Activated CD4-positive, alpha-beta T cell treated with anti-CD3 and anti-CD28 coated beads for 36 hours (primary cell): ENCODE measurements at regions of chr11 and their contacts with region 1.

Region 1: GRCh38 chr11:123381817-123382554 is 48.1 kb upstream of the GRAMD1B start:
- DNase-seq: peak; percentile 81
- ATAC-seq: peak; percentile 91
- H3K4me3 Mint-ChIP-seq: no peak overlapping the region
- H3K27ac Mint-ChIP-seq: peak overlapping the region; percentile 78
- H3K4me1 Mint-ChIP-seq: peaks cover 29% of the 10 kb centered on the region
- H3K27me3 Mint-ChIP-seq: peaks cover 4% of the 10 kb centered on the region

Region 2: DNA sequence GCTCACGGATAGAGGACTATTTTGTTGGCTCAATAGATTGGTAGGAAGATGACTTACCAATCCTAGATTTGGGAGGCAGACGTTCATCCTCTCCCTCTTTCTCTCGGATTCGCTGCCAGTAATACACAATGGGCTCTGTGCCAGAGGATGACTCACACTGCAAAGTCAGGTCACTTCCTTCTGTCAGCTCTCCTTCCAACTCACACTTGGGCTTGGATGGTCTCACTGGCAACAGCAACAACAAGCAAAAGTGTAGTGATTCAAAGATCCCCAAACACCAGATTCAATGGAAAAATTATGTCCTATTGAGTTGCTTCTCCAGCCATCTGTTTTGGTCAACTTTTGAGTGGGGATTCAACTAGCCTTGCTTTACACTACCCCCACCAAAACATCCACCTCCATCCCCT is 298.4 kb before region 1 on chr11:
- CTCF ChIA-PET with region 1: no interaction called
- POLR2A ChIA-PET with region 1: no interaction called
- intact Hi-C with region 1: loop called in 1 of 2 experiments (anchors 5 kb)
- DNase-seq: peak; percentile 89
- ATAC-seq: peak; percentile 35
- H3K4me3 Mint-ChIP-seq: peak overlapping the region; percentile 34
- H3K27ac Mint-ChIP-seq: peak overlapping the region; percentile 81
- H3K4me1 Mint-ChIP-seq: peaks cover 61% of the 10 kb centered on the region
- H3K27me3 Mint-ChIP-seq: no peaks in the 10 kb centered on the region

Region 3: DNA sequence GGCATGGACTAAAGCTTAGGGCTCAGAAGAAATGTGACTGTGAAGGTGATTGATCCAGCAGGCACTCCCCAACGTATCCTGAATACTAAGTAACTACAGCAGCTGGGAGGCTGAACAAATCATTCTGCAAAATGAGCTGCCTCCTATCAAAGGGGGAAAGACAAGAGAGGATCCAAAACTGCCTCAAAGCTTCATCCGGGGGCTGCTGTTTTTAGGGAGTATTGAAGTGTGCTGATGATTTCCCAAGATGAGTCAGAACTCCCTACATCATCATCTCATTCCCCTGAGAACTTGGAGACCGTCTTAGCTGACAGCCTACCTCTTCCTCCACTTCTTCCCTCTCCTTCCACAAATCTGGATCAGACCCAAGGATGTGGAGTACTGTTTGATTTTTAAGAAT is 60.4 kb before region 1 on chr11:
- CTCF ChIA-PET with region 1: no interaction called
- POLR2A ChIA-PET with region 1: no interaction called
- intact Hi-C with region 1: no loop called
- DNase-seq: no peak
- ATAC-seq: no peak
- H3K4me3 Mint-ChIP-seq: no peak overlapping the region
- H3K27ac Mint-ChIP-seq: no peak overlapping the region
- H3K4me1 Mint-ChIP-seq: no peaks in the 10 kb centered on the region
- H3K27me3 Mint-ChIP-seq: peaks cover 12% of the 10 kb centered on the region

Region 4: GRCh38 chr11:123338330-123339005 is 43.5 kb before region 1 on chr11:
- CTCF ChIA-PET with region 1: no interaction called
- POLR2A ChIA-PET with region 1: no interaction called
- intact Hi-C with region 1: loop called (anchors 2 to 5 kb)
- DNase-seq: peak; percentile 27
- ATAC-seq: peak; percentile 66
- H3K4me3 Mint-ChIP-seq: no peak overlapping the region
- H3K27ac Mint-ChIP-seq: no peak overlapping the region
- H3K4me1 Mint-ChIP-seq: peaks cover 8% of the 10 kb centered on the region
- H3K27me3 Mint-ChIP-seq: peaks cover 17% of the 10 kb centered on the region

Region 5: DNA sequence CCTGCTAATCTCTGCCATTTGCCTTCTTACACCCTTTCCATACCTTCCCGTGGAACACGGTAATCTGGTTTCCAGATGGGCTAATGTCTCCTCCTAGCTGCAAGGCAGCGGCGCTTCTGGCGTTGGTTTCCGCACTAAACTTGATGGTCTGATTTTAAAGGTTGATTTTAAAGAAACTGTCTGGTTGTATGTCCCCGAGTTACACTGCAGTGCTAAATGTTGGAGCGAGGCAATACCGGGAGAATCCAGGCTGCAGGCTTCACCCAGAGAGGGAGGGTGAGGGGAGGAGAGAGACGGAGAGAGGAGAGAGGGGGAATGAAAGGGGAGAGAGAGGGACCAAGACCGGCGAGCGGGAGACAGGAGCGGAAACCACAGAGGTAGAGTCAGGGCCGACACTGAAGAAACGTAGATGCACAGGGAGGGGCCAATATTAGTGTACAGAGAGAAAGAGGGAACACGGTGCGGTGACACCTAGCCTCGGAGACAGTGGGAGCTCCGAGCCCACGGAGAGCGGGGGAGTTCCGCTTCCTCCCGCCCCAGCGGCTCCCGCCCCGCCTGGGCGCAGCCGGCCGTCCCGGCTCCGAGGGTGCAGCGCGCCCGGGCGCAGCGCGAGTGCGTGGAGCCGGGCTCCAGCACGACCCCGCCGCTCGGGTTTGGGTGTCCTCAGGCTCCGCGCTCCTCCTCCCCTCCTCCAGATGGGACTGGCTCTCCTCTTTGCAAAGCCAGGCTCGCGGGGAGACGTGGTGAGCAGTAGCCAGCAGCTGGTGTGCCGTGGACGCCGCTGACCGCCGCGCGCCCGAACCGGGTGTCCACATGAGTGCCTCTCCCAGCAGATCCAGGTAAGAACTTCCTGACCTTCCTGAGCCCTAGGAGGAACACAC is 23.8 kb before region 1 on chr11:
- CTCF ChIA-PET with region 1: interaction called, 5 read pairs
- POLR2A ChIA-PET with region 1: interaction called, 13 read pairs
- intact Hi-C with region 1: loop called (anchors 1 kb)
- DNase-seq: peak; percentile 71
- ATAC-seq: peak; percentile 77
- H3K4me3 Mint-ChIP-seq: peak overlapping the region; percentile 78
- H3K27ac Mint-ChIP-seq: peak overlapping the region; percentile 74
- H3K4me1 Mint-ChIP-seq: peaks cover 49% of the 10 kb centered on the region
- H3K27me3 Mint-ChIP-seq: peaks cover 38% of the 10 kb centered on the region

Region 6: GRCh38 chr11:123407130-123407995 is 25.4 kb after region 1 on chr11:
- CTCF ChIA-PET with region 1: interaction called, 7 read pairs
- POLR2A ChIA-PET with region 1: no interaction called
- intact Hi-C with region 1: loop called in 1 of 2 experiments (anchors 2 kb)
- DNase-seq: peak; percentile 79
- ATAC-seq: peak; percentile 74
- H3K4me3 Mint-ChIP-seq: peak overlapping the region; percentile 33
- H3K27ac Mint-ChIP-seq: peak overlapping the region; percentile 63
- H3K4me1 Mint-ChIP-seq: peaks cover 26% of the 10 kb centered on the region
- H3K27me3 Mint-ChIP-seq: peaks cover 5% of the 10 kb centered on the region

Region 7: GRCh38 chr11:123429913-123430720 is 48.1 kb after region 1 on chr11 and contains the start of gene GRAMD1B:
- CTCF ChIA-PET with region 1: interaction called, 3 read pairs
- POLR2A ChIA-PET with region 1: no interaction called
- intact Hi-C with region 1: loop called (anchors 1 kb)
- DNase-seq: peak; percentile 90
- ATAC-seq: peak; percentile 68
- H3K4me3 Mint-ChIP-seq: peak within 1 kb of the TSS; percentile 76
- H3K27ac Mint-ChIP-seq: peak within 1 kb of the TSS; percentile 79
- H3K4me1 Mint-ChIP-seq: peaks cover 39% of the 10 kb centered on the region
- H3K27me3 Mint-ChIP-seq: no peaks in the 10 kb centered on the region
- total RNA-seq, gene GRAMD1B: 38.6 to 45.7 TPM

Region 8: GRCh38 chr11:123454060-123454651 is 72.2 kb after region 1 on chr11:
- CTCF ChIA-PET with region 1: interaction called, 3 read pairs
- POLR2A ChIA-PET with region 1: interaction called, 4 read pairs
- intact Hi-C with region 1: loop called (anchors 1 kb)
- DNase-seq: peak; percentile 88
- ATAC-seq: peak; percentile 87
- H3K4me3 Mint-ChIP-seq: peak overlapping the region; percentile 69
- H3K27ac Mint-ChIP-seq: peak overlapping the region; percentile 94
- H3K4me1 Mint-ChIP-seq: peaks cover 78% of the 10 kb centered on the region
- H3K27me3 Mint-ChIP-seq: no peaks in the 10 kb centered on the region